GM10248 (cell line): ENCODE measurements at regions of chrX and their contacts with region 1.

Region 1: DNA sequence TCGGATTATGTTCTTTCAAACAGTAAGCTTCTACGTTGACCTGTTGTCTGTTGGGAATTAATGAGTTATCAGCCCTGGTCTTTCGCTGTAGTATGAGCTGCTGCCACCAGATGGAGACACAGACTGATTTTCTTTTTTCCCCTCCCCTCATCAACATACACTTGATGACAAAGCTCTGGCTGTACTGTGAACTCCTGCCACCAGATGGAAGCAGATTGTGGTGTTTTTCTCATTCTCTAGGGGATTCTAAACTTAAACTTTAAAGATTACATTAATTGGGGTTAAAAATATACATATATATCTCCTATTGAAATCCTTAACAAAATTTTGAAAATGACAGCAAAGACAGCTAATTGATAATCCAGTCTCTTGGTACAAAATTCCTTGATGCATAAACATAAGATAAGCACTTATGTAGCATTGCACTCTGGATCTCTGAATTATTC is 44.8 kb downstream of the SMS start:
- DNase-seq: peak; percentile 66
- CTCF ChIP-seq: peak; percentile 59

Region 2: DNA sequence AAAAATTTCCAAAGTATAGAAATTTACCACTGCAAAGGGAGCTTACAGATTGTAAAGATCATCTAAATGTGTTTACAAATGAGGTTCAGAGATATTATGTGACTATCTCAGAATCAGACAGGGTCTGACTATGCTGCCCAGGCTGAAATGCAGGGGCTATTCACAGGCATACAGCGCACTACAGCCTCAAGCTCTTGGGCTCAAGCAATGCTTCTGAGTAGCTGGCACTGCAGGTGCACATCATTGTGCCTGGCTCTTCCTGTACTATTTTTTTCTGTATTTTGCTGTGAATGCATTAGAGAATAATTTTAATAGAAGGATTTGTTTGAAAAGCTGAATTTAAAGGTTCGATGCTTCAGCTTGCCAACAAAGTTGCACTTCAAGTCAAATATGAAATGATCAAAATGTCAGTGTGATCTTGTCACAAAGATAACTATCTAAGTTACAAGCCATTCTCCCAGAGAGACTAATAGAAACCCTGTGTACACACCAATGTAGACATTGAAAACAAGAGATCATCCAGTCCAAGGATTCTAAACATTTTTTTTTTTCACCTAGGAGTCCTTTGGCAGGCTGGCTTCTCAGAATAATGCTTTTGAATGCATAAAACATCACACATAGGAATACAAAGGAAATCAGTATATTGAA is 70.9 kb before region 1 on chrX:
- CTCF ChIA-PET with region 1: no interaction called
- POLR2A ChIA-PET with region 1: no interaction called
- DNase-seq: no peak
- CTCF ChIP-seq: no peak

Region 3: GRCh38 chrX:21972721-21973120 is 12.6 kb before region 1 on chrX:
- CTCF ChIA-PET with region 1: interaction called, 27 read pairs
- POLR2A ChIA-PET with region 1: no interaction called
- DNase-seq: no peak
- CTCF ChIP-seq: no peak

Region 4: DNA sequence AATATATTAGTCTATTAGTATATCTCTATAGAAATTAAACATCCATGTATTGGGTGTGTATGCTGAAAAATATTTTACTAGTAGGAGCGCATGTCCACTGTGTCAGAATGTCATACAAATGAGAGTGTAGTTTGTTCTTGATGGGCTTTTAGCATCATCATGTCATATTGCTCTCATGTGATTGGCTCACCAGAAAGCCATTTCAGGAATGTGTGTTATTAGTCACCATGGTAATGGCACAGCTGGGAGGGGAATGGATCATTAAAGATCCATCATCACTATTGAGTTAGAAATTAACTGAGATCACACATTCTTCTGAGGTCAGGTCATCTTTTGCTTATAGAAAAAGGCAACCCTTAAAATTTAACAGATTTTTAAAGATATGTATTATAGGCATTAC is 124.1 kb after region 1 on chrX:
- CTCF ChIA-PET with region 1: interaction called, 11 read pairs
- POLR2A ChIA-PET with region 1: no interaction called
- DNase-seq: no peak
- CTCF ChIP-seq: no peak

Region 5: GRCh38 chrX:22192417-22193060 is 207.2 kb after region 1 on chrX:
- CTCF ChIA-PET with region 1: interaction called, 11 read pairs
- POLR2A ChIA-PET with region 1: no interaction called
- DNase-seq: peak; percentile 40
- CTCF ChIP-seq: peak; percentile 71

Region 6: GRCh38 chrX:23317799-23318724 is 1332.7 kb after region 1 on chrX:
- CTCF ChIA-PET with region 1: interaction called, 15 read pairs
- POLR2A ChIA-PET with region 1: no interaction called
- DNase-seq: peak; percentile 57
- CTCF ChIP-seq: peak; percentile 65